ENCODE measurements at regions of chr14 and their contacts with region 1.

Region 1: DNA sequence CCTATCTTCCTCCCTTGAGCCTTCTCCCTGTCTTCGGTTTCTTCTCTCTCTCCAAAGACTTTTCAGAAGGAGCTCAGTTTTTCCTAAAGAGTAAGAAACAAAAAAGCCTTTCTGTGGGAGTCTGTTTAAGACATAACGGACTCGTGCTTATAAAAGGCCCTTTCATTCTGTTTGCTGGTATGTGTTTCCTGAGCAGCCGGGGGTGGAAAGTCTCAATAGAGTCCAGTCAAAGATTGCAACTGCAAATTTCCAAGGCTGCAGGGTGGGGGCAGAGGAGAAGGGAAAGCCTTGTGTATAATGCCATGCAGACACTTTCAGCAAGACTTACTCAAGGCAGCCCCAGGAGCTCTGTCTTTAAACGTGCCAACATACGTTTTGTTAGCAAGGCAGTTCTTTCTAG is 62.2 kb downstream of the GNG2 start:
- DNase-seq: no peak
- H3K4me3 ChIP-seq: peak overlapping the region in 1 of 3 donors; percentile 2
- H3K27ac ChIP-seq: peak overlapping the region; percentile 33 to 56
- H3K4me1 ChIP-seq: no peaks in the 10 kb centered on the region
- H3K27me3 ChIP-seq: no peaks in the 10 kb centered on the region
- CTCF ChIP-seq: no peak
- POLR2A ChIP-seq: no peak

Region 2: DNA sequence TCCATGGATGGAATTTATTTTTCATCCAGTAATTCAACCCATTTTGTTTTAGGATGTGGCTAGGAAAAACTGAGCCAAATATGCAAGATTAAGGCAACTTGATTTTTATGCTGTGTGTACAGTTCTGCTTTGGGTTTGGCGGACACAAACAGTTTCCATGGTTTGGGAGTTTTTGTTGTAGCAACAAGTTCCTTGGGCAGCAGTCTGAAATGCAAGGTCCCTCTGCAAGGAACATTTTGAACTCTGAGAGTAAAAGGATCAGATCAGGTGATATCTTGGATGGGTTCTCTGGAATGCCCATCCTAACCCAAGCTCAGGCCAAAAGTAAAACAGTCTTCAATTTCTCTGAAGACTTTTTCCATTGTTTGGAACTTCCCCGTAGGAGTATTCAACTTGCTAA is 521.3 kb before region 1 on chr14:
- intact Hi-C with region 1: loop called (anchors 5 kb)
- DNase-seq: peak in 1 of 2 donors; percentile 51
- H3K4me3 ChIP-seq: no peak overlapping the region
- H3K27ac ChIP-seq: peak overlapping the region; percentile 80 to 86
- H3K4me1 ChIP-seq: peaks cover 0 to 11% of the 10 kb centered on the region in 2 donors
- H3K27me3 ChIP-seq: no peaks in the 10 kb centered on the region
- CTCF ChIP-seq: no peak
- POLR2A ChIP-seq: no peak

Region 3: GRCh38 chr14:51908086-51908485 is 14.5 kb before region 1 on chr14:
- intact Hi-C with region 1: no loop called
- DNase-seq: no peak
- H3K4me3 ChIP-seq: no peak overlapping the region
- H3K27ac ChIP-seq: no peak overlapping the region
- H3K4me1 ChIP-seq: no peaks in the 10 kb centered on the region
- H3K27me3 ChIP-seq: no peaks in the 10 kb centered on the region
- CTCF ChIP-seq: no peak
- POLR2A ChIP-seq: no peak